A549 (cell line): ENCODE measurements at regions of chr7 and their contacts with region 1.

Region 1: DNA sequence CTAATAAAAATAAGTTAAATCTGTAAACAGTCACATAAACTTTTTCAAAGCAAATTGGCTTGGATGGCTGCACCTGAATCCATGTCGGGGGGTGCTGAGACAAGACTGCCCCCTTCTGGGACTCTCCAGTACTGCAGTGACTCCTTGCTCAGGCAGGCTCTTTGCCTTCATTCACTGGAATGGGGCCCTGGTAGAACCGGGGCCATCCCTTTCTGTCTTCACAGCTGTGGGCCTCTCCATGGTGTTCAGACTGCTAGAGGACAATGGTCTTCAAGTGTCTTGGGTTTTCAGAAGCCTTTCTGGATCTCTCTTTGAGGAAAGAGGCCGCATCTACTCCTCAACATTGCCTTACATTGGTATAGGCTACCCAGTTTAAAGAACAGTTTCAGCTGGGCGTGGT is 16.1 kb upstream of the IMPDH1 start:
- DNase-seq: peak; percentile 67 to 89
- ATAC-seq: peak; percentile 62 to 71; a peak in 5 of 6 replicates
- H3K4me3 ChIP-seq: no peak overlapping the region
- H3K27ac ChIP-seq: no peak overlapping the region
- H3K4me1 ChIP-seq: peaks cover 20% of the 10 kb centered on the region
- CTCF ChIP-seq: peak; percentile 88
- EP300 ChIP-seq: no peak
- POLR2A ChIP-seq: no peak
- RAD21 ChIP-seq: peak; percentile 81 to 91

Region 2: GRCh38 chr7:128381161-128381821 is 44.6 kb before region 1 on chr7:
- CTCF ChIA-PET with region 1: interaction called, 89 read pairs
- POLR2A ChIA-PET with region 1: no interaction called
- DNase-seq: no peak
- ATAC-seq: peak in 1 of 2 experiments; percentile 73; a peak in 3 of 6 replicates
- H3K4me3 ChIP-seq: no peak overlapping the region
- H3K27ac ChIP-seq: no peak overlapping the region
- H3K4me1 ChIP-seq: no peaks in the 10 kb centered on the region
- CTCF ChIP-seq: peak; percentile 48
- EP300 ChIP-seq: no peak
- POLR2A ChIP-seq: no peak
- RAD21 ChIP-seq: no peak

Region 3: DNA sequence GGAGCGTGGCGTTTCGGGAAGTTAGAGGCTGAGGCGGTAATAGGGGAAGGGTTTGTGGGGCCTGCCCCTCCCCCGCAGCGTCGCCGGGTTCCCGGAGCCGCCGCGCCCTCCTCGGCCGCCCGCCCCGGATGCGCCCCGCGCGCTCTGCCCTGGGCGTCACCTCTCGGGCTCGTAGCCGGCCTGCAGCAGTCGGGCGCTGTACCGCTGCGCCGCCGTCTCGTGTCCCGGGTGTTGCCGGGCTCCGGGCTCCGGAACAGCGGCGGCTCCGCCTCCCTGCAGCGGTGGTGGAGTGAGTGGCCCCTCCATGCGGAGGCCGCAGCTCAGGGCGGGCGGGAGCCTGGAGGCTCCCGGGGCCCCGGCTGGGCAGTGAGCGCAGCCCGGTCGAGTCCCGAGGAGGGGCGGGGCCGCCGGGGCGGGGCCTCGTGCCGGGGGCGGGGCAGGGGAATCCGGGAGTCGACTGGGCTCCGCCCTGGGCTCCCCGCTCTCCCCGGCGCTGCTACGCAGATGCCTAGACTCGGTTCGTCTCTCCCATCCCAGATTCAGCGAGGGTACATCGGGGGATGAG is 16.2 kb before region 1 on chr7 and contains the start of gene IMPDH1:
- CTCF ChIA-PET with region 1: interaction called, 695 read pairs
- POLR2A ChIA-PET with region 1: interaction called, 3 read pairs
- DNase-seq: peak; percentile 74 to 93
- ATAC-seq: peak; percentile 76 to 91
- H3K4me3 ChIP-seq: peak within 1 kb of the TSS; percentile 69
- H3K27ac ChIP-seq: peak within 1 kb of the TSS; percentile 84 to 94
- H3K4me1 ChIP-seq: peaks cover 31% of the 10 kb centered on the region
- CTCF ChIP-seq: no peak
- EP300 ChIP-seq: no peak
- POLR2A ChIP-seq: peak; percentile 83
- RAD21 ChIP-seq: no peak
- polyA plus RNA-seq, gene IMPDH1: 55.4 and 83.3 TPM in 2 replicates

Region 4: DNA sequence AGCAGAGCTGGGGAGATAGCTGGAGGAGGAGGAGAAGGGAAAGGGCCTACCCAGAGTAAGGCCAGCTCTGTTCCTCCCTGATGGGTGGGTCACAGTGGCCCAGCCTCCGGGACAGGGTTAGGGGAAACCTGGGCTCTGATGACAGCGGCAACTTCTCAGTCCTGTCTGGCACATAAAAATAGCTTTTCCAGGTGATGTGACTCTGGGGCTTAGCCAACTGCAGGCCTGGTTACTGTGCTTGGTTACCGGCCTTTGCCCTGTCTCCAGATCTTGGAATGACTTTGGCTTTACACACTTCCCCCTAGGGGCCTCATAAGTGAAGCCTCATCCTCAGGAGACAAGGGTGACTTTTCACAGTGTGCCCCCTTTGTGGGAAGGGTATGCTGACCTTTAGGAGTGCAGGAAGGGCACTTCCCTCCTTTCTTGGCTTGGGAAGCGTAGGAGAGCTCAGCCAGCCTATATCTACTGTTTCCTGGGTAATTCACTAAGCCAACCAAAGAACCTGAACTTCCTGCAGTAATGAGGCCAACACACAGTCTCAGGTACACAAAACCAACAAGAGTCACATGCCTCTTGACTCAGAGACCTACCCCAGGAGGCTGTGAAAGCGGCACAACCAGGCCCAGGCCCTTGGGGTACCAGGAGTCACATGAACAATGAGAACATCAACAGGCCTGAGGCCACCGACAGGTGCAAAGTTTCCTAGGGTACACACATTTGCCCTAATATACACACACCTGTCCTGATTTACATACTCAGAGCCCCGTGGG is 18.2 kb after region 1 on chr7:
- CTCF ChIA-PET with region 1: interaction called, 79 read pairs
- POLR2A ChIA-PET with region 1: no interaction called
- DNase-seq: no peak
- ATAC-seq: peak; percentile 23 to 51; a peak in 3 of 6 replicates
- H3K4me3 ChIP-seq: no peak overlapping the region
- H3K27ac ChIP-seq: peak overlapping the region; percentile 51 to 52
- H3K4me1 ChIP-seq: peaks cover 25% of the 10 kb centered on the region
- CTCF ChIP-seq: no peak
- EP300 ChIP-seq: no peak
- POLR2A ChIP-seq: no peak
- RAD21 ChIP-seq: no peak

Region 5: GRCh38 chr7:128462460-128462859 is 36.6 kb after region 1 on chr7:
- CTCF ChIA-PET with region 1: interaction called, 345 read pairs
- POLR2A ChIA-PET with region 1: interaction called, 5 read pairs
- DNase-seq: no peak
- ATAC-seq: no peak
- H3K4me3 ChIP-seq: no peak overlapping the region
- H3K27ac ChIP-seq: no peak overlapping the region
- H3K4me1 ChIP-seq: peaks cover 45% of the 10 kb centered on the region
- CTCF ChIP-seq: no peak
- EP300 ChIP-seq: no peak
- POLR2A ChIP-seq: no peak
- RAD21 ChIP-seq: no peak

Region 6: GRCh38 chr7:128697302-128697905 is 271.6 kb after region 1 on chr7:
- CTCF ChIA-PET with region 1: no interaction called
- POLR2A ChIA-PET with region 1: no interaction called
- DNase-seq: peak; percentile 80 to 87
- ATAC-seq: peak; percentile 90 to 94
- H3K4me3 ChIP-seq: peak overlapping the region; percentile 50
- H3K27ac ChIP-seq: peak overlapping the region; percentile 56 to 84
- H3K4me1 ChIP-seq: no peaks in the 10 kb centered on the region
- CTCF ChIP-seq: 0 out of 3 replicates have a peak, but pooled peaks have one; percentile 22
- EP300 ChIP-seq: no peak
- POLR2A ChIP-seq: no peak
- RAD21 ChIP-seq: peak in 1 of 2 experiments; percentile 10; a peak in 2 of 5 replicates